ENCODE measurements at regions of chr6 and their contacts with region 1.

Region 1: DNA sequence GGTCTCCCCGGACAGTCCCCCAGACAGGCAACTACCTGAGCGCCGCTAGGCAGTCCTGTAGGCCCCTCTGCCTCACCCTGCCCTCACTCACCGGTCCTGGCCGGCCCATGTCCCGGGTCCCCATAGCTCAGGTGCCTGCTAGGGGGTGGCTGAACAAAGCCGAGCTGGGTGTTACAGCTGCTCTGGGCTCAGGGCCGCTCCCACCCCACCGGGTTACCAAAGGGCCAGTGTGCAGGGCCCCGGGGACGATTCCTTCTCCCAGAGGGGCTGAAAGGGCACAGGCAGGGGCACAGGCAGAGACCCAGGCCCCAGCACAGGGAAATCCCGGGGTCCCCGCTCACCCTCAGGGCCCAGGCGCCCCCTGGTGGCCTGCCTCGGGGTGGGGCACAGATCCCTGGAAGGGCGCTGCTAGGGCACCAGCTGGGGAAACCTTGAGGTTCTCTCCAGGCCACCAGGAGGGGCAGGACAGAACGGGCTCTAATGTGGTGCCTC is 118.4 kb downstream of the GRM4 start:
- DNase-seq: no peak
- H3K4me3 ChIP-seq: no peak overlapping the region
- H3K27ac ChIP-seq: no peak overlapping the region
- H3K4me1 ChIP-seq: no peaks in the 10 kb centered on the region
- H3K27me3 ChIP-seq: peaks cover 0 to 5% (median 0%) of the 10 kb centered on the region in 3 donors
- CTCF ChIP-seq: peak; percentile 71 to 95 (median 84)
- EP300 ChIP-seq: no peak
- POLR2A ChIP-seq: no peak

Region 2: GRCh38 chr6:33851959-33852358 is 175.5 kb before region 1 on chr6:
- intact Hi-C with region 1: loop called (anchors 10 kb)
- DNase-seq: no peak
- H3K4me3 ChIP-seq: no peak overlapping the region
- H3K27ac ChIP-seq: no peak overlapping the region
- H3K4me1 ChIP-seq: peaks cover 0 to 10% (median 6%) of the 10 kb centered on the region in 4 donors
- H3K27me3 ChIP-seq: peaks cover 0 to 31% (median 0%) of the 10 kb centered on the region in 3 donors
- CTCF ChIP-seq: peak in 3 of 4 experiments; percentile 22 to 35 (median 23)
- EP300 ChIP-seq: no peak
- POLR2A ChIP-seq: no peak

Region 3: DNA sequence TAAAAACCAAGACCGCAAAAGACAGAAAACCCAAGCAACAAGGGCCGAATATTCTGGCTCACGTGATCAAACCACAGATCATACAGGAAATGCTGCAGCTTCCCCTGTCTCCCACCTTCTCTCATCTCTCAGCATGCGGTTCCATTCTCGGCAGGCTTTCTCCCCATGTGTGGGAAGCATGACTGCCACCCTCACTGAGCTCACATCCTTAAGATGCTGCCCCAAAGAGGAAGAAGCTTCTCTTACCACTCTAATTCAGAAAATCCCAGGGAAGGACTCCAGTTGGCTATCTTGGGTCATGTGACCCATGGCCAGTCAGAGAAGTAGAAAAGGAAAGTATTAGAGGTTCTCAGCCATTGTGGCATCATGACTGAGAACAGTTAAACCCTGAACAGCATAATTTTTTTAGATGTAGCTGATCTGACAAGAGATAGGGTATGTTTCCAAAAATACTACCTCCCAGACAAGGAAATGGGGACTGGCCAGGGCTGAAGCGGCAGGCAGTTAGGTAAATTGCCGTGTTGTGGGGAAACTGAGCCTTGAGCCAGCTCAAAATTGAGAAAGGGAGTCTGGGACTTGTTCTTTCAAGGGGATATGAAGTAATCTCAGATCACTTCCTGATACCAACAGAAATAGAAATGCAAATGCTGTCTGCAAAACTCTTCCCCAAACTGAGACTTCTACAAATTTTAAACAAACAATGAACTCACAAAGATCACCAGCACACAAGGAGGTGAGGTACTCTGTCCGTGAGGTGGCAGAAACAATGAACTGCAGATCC is 155.4 kb after region 1 on chr6:
- intact Hi-C with region 1: no loop called
- DNase-seq: no peak
- H3K4me3 ChIP-seq: no peak overlapping the region
- H3K27ac ChIP-seq: no peak overlapping the region
- H3K4me1 ChIP-seq: no peaks in the 10 kb centered on the region
- H3K27me3 ChIP-seq: no peaks in the 10 kb centered on the region
- CTCF ChIP-seq: no peak
- EP300 ChIP-seq: no peak
- POLR2A ChIP-seq: no peak

Measured in sigmoid colon (tissue), 7 donors.